Activated CD4-positive, alpha-beta T cell treated with anti-CD3 and anti-CD28 coated beads, Interleukin-2, amount 10 ng/mL, durations not matched to agents 24 days and 14 days (primary cell): ENCODE measurements at regions of chr20 and their contacts with region 1.

Region 1: DNA sequence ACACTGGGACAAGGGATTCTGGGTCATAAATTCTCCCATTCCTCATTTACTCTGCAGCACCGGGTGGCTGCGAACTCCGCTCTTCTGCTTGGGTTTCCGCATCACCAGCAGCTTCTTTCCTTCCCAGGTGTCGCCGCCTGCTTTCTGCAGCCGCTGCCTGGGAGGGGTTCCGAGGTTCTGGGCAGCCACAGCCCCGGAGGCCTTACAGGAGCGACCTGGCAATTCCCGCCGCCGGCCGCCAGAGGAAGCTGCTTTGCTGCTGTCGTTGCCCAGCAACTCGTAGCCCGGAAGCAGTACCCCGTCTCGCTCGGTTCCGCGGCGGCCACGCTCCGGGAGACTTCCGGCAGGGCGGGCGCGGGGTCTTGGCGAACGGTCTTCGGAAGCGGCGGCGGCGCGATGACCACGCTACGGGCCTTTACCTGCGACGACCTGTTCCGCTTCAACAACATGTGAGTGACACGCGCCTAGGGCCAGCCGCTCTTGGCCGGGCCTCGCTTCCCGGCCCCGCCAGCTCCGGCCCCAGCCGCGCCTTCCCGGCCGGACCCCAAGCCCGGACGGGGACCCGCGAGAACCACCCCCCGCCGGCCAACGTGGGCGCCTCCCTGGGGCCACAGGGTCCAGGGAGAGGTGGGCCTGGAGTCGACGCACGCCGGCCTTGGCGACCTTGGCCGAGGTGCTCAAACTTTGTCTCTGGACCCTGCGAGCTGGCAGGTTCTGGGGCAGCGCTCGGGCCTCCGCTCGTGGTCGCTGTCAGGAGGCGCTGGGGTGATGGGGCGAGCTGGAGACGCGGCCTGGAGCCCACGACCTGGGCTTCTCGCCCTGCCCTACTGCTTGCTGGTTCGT is at the start of gene NAA20:
- DNase-seq: peak; percentile 97
- H3K4me3 Mint-ChIP-seq: peak within 1 kb of the TSS; percentile 94
- H3K27ac Mint-ChIP-seq: peak within 1 kb of the TSS; percentile 85
- H3K4me1 Mint-ChIP-seq: peaks cover 34% of the 10 kb centered on the region
- H3K27me3 Mint-ChIP-seq: no peaks in the 10 kb centered on the region
- total RNA-seq, gene NAA20: 85.4 and 96.4 TPM in 2 replicates

Region 2: GRCh38 chr20:20052074-20052970 is 35.1 kb after region 1 on chr20 and contains the starts of genes CFAP61 and CRNKL1:
- intact Hi-C with region 1: loop called (anchors 1 kb)
- DNase-seq: peak; percentile 99
- H3K4me3 Mint-ChIP-seq: peak within 1 kb of the TSS; percentile 98
- H3K27ac Mint-ChIP-seq: peak within 1 kb of the TSS; percentile 96
- H3K4me1 Mint-ChIP-seq: peaks cover 10% of the 10 kb centered on the region
- H3K27me3 Mint-ChIP-seq: peaks cover 1% of the 10 kb centered on the region
- total RNA-seq, gene CFAP61: not detected in 2 replicates
- total RNA-seq, gene CRNKL1: 22.7 and 25.1 TPM in 2 replicates